ENCODE measurements at regions of chr1 and their contacts with region 1.

Region 1: DNA sequence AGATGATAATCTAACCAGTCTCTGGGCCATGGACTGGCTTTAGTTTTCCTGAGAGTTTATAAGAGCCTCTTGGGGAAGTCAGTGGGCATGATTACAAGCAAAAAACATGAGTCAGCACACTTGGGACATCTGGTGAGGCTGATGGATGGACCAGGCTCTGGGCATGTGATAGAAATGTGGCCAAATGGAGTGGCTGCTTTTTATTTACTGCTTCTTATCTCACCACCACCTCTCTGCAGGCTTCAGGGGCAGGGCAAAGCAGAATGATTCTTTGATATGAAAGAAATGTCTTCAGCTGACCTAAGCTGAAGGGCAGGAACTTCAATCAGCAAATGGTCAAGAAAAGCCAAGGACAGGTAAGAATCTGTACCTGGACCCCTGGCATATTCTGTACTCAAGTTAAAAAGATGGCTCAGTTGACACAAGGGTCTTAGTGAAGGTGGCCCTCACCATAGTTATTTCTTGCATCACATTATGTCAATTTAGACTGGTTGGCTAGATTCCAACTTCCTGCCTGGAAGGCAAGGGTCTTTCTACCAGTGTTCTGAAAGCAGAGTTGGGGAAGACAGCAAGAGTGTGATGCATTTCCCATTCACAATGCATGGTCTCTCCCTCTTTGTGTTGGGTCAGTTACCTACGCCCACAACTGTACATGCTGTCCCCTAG is 162.8 kb downstream of the FASLG start:
- DNase-seq: no peak
- H3K4me3 ChIP-seq: no peak overlapping the region
- H3K27ac ChIP-seq: no peak overlapping the region
- H3K4me1 ChIP-seq: peaks cover 5 to 17% (median 14%) of the 10 kb centered on the region in 4 donors
- H3K27me3 ChIP-seq: no peaks in the 10 kb centered on the region
- CTCF ChIP-seq: no peak
- EP300 ChIP-seq: no peak
- POLR2A ChIP-seq: no peak

Region 2: GRCh38 chr1:172883107-172883791 is 61.5 kb after region 1 on chr1:
- intact Hi-C with region 1: no loop called
- DNase-seq: no peak
- H3K4me3 ChIP-seq: no peak overlapping the region
- H3K27ac ChIP-seq: no peak overlapping the region
- H3K4me1 ChIP-seq: peaks cover 0 to 20% (median 13%) of the 10 kb centered on the region in 4 donors
- H3K27me3 ChIP-seq: no peaks in the 10 kb centered on the region
- CTCF ChIP-seq: no peak
- EP300 ChIP-seq: no peak
- POLR2A ChIP-seq: no peak

Region 3: GRCh38 chr1:173202430-173203145 is 380.8 kb after region 1 on chr1:
- intact Hi-C with region 1: loop called (anchors 2 kb)
- DNase-seq: no peak
- H3K4me3 ChIP-seq: no peak overlapping the region
- H3K27ac ChIP-seq: peak overlapping the region in 1 of 4 donors; percentile 1
- H3K4me1 ChIP-seq: peaks cover 12 to 30% (median 23%) of the 10 kb centered on the region in 4 donors
- H3K27me3 ChIP-seq: no peaks in the 10 kb centered on the region
- CTCF ChIP-seq: peak; percentile 49 to 69 (median 68)
- EP300 ChIP-seq: no peak
- POLR2A ChIP-seq: no peak

Region 4: DNA sequence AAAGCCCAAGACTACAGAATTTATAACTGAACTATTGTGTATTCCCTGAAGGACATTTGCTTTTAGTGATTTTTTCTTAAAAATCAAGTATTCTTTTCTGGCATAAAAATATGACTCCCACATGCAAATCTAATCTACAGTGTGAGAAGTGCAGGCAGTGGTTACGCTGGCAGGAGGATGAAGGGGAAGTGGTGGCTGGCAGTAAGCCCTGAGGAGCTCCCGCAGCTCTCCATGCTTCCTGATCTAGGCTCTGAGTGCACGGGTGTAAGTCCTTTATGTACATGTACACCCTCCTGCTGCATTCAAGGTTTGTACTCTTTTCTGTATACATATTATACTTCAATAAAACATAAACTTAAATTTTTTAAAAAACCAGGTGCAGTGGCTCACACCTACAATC is 587.9 kb after region 1 on chr1:
- intact Hi-C with region 1: loop called (anchors 5 kb)
- DNase-seq: no peak
- H3K4me3 ChIP-seq: no peak overlapping the region
- H3K27ac ChIP-seq: no peak overlapping the region
- H3K4me1 ChIP-seq: peaks cover 0 to 7% (median 3%) of the 10 kb centered on the region in 4 donors
- H3K27me3 ChIP-seq: no peaks in the 10 kb centered on the region
- CTCF ChIP-seq: no peak
- EP300 ChIP-seq: no peak
- POLR2A ChIP-seq: no peak